B cell (primary cell): ENCODE measurements at regions of chr11 and their contacts with region 1.

Region 1: DNA sequence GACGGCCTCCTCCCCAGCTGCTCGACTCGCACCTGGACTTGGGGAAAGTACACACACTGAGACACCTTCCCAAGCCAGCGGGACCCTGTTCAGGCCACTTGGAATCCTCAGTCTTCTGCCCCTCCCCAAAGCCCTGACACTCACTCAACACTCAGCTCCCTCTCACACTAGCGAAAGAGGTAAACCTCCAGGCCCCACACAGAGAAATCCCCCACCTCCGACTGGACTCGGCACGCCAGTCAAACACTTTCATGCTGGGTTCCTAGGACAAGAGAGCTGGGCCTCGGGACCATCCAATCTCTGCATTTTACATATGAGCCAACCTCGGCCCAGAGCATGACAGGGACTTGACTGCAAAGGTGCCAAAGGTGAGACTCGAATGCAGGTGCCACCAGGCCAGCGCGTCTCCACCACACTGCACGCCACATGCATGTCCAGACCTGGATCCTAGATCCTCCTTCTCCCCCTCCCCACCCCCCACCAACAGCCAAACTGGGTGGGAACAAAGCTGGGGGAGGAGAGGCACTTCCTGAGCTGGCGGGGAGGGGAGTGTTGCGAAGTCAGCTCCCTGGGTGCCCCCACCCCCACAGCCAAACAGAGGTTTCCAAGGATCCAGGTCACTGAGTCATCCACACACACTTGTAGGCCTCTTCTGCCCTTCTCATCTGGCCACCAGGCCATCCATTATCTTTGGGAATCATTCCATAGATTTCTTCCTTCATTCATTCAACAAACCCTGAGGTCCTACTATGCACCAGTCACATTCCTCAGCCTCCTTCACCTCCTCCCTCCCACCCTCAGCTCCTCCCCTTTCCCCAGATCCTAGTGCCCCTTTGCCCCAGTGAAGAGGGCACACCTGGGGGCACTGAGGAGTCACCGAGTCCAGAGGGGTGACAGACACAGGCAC is 10.7 kb upstream of the CD5 start:
- DNase-seq: peak; percentile 11
- ATAC-seq: peak; percentile 11
- H3K4me3 ChIP-seq: no peak overlapping the region
- H3K4me3 Mint-ChIP-seq: peak overlapping the region; percentile 65
- H3K27ac ChIP-seq: peak overlapping the region; percentile 26 to 69
- H3K27ac Mint-ChIP-seq: peak overlapping the region; percentile 95
- H3K4me1 ChIP-seq: peaks cover 47 to 56% of the 10 kb centered on the region in 2 donors
- H3K4me1 Mint-ChIP-seq: peaks cover 72% of the 10 kb centered on the region
- H3K27me3 ChIP-seq: no peaks in the 10 kb centered on the region
- H3K27me3 Mint-ChIP-seq: no peaks in the 10 kb centered on the region
- CTCF ChIP-seq: no peak

Region 2: GRCh38 chr11:61028272-61028761 is 63.3 kb before region 1 on chr11:
- CTCF ChIA-PET with region 1: no interaction called
- POLR2A ChIA-PET with region 1: interaction called, 3 read pairs
- intact Hi-C with region 1: loop called (anchors 5 kb)
- DNase-seq: peak; percentile 62
- ATAC-seq: peak; percentile 88
- H3K4me3 ChIP-seq: no peak overlapping the region
- H3K4me3 Mint-ChIP-seq: peak overlapping the region; percentile 67
- H3K27ac ChIP-seq: no peak overlapping the region
- H3K27ac Mint-ChIP-seq: peak overlapping the region; percentile 76
- H3K4me1 ChIP-seq: peaks cover 40 to 45% of the 10 kb centered on the region in 2 donors
- H3K4me1 Mint-ChIP-seq: peaks cover 48% of the 10 kb centered on the region
- H3K27me3 ChIP-seq: no peaks in the 10 kb centered on the region
- H3K27me3 Mint-ChIP-seq: no peaks in the 10 kb centered on the region
- CTCF ChIP-seq: no peak

Region 3: GRCh38 chr11:61061081-61061826 is 30.4 kb before region 1 on chr11:
- CTCF ChIA-PET with region 1: no interaction called
- POLR2A ChIA-PET with region 1: no interaction called
- intact Hi-C with region 1: loop called (anchors 5 kb)
- DNase-seq: peak; percentile 84
- ATAC-seq: peak; percentile 91
- H3K4me3 ChIP-seq: peak overlapping the region in 2 of 5 experiments; percentile 9 to 30
- H3K4me3 Mint-ChIP-seq: peak overlapping the region; percentile 64
- H3K27ac ChIP-seq: peak overlapping the region in 1 of 2 donors; percentile 44
- H3K27ac Mint-ChIP-seq: peak overlapping the region; percentile 86
- H3K4me1 ChIP-seq: peaks cover 20 to 25% of the 10 kb centered on the region in 2 donors
- H3K4me1 Mint-ChIP-seq: peaks cover 30% of the 10 kb centered on the region
- H3K27me3 ChIP-seq: no peaks in the 10 kb centered on the region
- H3K27me3 Mint-ChIP-seq: no peaks in the 10 kb centered on the region
- CTCF ChIP-seq: no peak

Region 4: GRCh38 chr11:61080986-61081590 is 10.5 kb before region 1 on chr11:
- CTCF ChIA-PET with region 1: interaction called, 3 read pairs
- POLR2A ChIA-PET with region 1: interaction called, 10 read pairs
- intact Hi-C with region 1: no loop called
- DNase-seq: no peak
- ATAC-seq: no peak
- H3K4me3 ChIP-seq: no peak overlapping the region
- H3K4me3 Mint-ChIP-seq: no peak overlapping the region
- H3K27ac ChIP-seq: no peak overlapping the region
- H3K27ac Mint-ChIP-seq: no peak overlapping the region
- H3K4me1 ChIP-seq: peaks cover 0 to 6% of the 10 kb centered on the region in 2 donors
- H3K4me1 Mint-ChIP-seq: peaks cover 4% of the 10 kb centered on the region
- H3K27me3 ChIP-seq: no peaks in the 10 kb centered on the region
- H3K27me3 Mint-ChIP-seq: no peaks in the 10 kb centered on the region
- CTCF ChIP-seq: no peak